Dendritic cell treated with granulocyte-macrophage colony-stimulating factor and Interleukin-4, amounts not matched to agents 40 ng/mL and 50 ng/mL, for 4 days (primary cell): ENCODE measurements at regions of chr7 and their contacts with region 1.

Region 1: DNA sequence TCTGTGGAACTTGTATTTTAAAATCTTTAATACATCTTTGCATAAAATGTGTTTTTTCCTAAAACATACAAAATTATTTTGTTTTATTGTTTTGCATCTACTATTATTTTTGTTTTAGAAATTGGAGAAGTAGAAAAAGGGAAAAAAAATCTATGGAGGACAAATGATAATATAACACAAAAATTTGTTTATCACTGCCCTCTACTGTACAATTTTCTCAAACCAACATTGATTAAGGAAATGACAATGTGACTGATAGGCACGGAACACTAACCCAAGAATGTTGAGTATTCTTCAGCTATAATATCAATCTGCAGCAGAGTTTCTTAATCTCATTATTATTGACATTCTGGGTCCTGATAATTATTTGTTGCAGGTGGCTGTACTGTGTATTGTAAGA is 9.5 kb upstream of the ING3 start:
- H3K4me3 Mint-ChIP-seq: no peak overlapping the region
- H3K27ac Mint-ChIP-seq: no peak overlapping the region
- H3K4me1 Mint-ChIP-seq: no peaks in the 10 kb centered on the region
- H3K27me3 Mint-ChIP-seq: no peaks in the 10 kb centered on the region

Region 2: DNA sequence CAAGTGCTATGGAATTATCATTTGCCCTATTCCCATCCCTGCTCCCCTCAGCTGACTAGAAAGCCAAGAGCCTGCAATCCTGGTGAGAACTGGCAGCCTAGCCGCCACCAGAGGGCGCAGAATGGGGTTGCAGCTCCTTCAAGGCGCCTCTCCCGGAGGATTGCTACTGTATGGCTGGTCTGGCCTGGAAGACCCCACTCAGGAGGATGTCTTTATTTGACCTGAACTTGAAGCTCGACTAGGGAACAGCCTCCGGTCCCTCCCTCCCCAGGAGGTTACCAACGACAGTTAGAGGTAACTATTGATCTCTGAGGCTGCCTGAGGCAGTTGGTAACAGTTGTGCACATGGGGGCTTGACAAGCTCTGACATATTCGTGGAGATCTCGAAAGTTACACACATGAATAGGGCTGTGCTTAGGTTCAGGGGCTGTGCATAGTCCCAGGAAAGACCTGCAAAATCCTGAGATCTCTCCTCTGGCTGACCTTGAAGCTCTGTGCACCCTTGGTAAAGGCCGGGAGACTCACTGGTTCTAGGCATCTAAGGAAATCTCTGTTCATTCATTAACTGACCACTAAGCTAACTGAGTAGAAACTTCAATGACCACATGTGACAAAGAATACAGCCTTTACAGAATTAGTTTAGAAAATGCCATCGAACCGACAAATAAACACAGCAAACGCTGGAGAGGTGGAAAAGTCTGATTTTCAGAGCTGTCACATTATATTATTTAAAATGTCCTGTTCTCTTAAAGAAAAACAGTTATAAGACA is 148.8 kb before region 1 on chr7:
- intact Hi-C with region 1: loop called (anchors 1 kb)
- H3K4me3 Mint-ChIP-seq: no peak overlapping the region
- H3K27ac Mint-ChIP-seq: no peak overlapping the region
- H3K4me1 Mint-ChIP-seq: no peaks in the 10 kb centered on the region
- H3K27me3 Mint-ChIP-seq: no peaks in the 10 kb centered on the region

Region 3: DNA sequence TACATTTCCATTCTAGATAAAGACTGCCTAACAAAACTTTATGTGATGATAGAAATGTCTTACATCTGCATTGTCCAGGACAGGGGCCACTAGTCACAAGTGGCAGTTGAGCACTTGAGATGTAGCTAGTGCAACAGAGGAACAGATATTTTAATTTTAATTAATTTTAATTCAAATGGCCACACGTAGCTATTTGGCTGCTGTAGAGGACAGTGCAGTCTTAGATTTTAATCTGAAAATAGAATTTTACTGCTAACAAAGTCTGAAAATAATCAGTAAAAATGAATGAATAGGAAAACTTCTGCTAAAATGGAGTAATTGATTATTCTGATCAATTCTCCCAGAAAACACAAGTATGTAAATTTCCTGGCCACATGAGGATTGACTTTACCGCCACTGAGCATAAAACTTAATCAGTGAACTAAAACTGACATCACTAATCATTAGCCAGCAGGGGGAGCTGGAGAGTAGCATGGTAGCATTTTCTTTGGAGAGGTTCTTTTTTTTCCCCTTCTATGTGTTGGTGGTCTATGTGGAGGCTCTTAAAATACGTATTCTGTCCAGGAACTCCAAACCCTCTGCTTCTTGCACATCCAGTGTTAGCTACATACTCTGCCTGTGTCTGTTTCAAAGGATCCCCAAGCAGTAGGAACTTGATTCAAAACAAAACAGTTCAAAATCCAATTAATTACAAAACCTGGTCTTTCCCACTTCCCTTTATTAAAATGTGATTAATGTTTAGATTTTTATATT is 135.3 kb before region 1 on chr7:
- intact Hi-C with region 1: loop called (anchors 2 kb)
- H3K4me3 Mint-ChIP-seq: no peak overlapping the region
- H3K27ac Mint-ChIP-seq: no peak overlapping the region
- H3K4me1 Mint-ChIP-seq: no peaks in the 10 kb centered on the region
- H3K27me3 Mint-ChIP-seq: no peaks in the 10 kb centered on the region